PC-9 (cell line): ENCODE measurements at regions of chr12 and their contacts with region 1.

Region 1: GRCh38 chr12:119115296-119115905 is 63.3 kb upstream of the HSPB8 start:
- DNase-seq: peak in 1 of 2 experiments; percentile 27
- H3K4me3 ChIP-seq: no peak overlapping the region
- H3K27ac ChIP-seq: no peak overlapping the region
- H3K4me1 ChIP-seq: no peaks in the 10 kb centered on the region
- H3K27me3 ChIP-seq: peaks cover 4% of the 10 kb centered on the region; the same call in 1 of the 2 replicates
- CTCF ChIP-seq: peak; percentile 96

Region 2: GRCh38 chr12:118884226-118884625 is 231.2 kb before region 1 on chr12:
- CTCF ChIA-PET with region 1: no interaction called
- POLR2A ChIA-PET with region 1: no interaction called
- intact Hi-C with region 1: no loop called
- DNase-seq: no peak
- H3K4me3 ChIP-seq: no peak overlapping the region
- H3K27ac ChIP-seq: no peak overlapping the region
- H3K4me1 ChIP-seq: no peaks in the 10 kb centered on the region
- H3K27me3 ChIP-seq: peaks cover 4% of the 10 kb centered on the region; the same call in 1 of the 2 replicates
- CTCF ChIP-seq: no peak

Region 3: GRCh38 chr12:119069147-119069642 is 46.2 kb before region 1 on chr12:
- CTCF ChIA-PET with region 1: no interaction called
- POLR2A ChIA-PET with region 1: no interaction called
- intact Hi-C with region 1: no loop called
- DNase-seq: no peak
- H3K4me3 ChIP-seq: no peak overlapping the region
- H3K27ac ChIP-seq: no peak overlapping the region
- H3K4me1 ChIP-seq: no peaks in the 10 kb centered on the region
- H3K27me3 ChIP-seq: peaks cover 29% of the 10 kb centered on the region
- CTCF ChIP-seq: no peak

Region 4: GRCh38 chr12:119229837-119230236 is 114.4 kb after region 1 on chr12:
- CTCF ChIA-PET with region 1: no interaction called
- POLR2A ChIA-PET with region 1: no interaction called
- intact Hi-C with region 1: loop called (anchors 10 kb)
- DNase-seq: peak in 1 of 2 experiments; percentile 12
- H3K4me3 ChIP-seq: peak overlapping the region; percentile 32; the same call in 1 of the 2 replicates
- H3K27ac ChIP-seq: no peak overlapping the region
- H3K4me1 ChIP-seq: 0 out of 2 replicates have a peak, but pooled peaks cover 5% of the 10 kb centered on the region
- H3K27me3 ChIP-seq: peaks cover 36% of the 10 kb centered on the region
- CTCF ChIP-seq: no peak

Region 5: GRCh38 chr12:119412811-119413794 is 297.7 kb after region 1 on chr12:
- CTCF ChIA-PET with region 1: no interaction called
- POLR2A ChIA-PET with region 1: no interaction called
- intact Hi-C with region 1: loop called (anchors 1 kb)
- DNase-seq: peak; percentile 37 to 44
- H3K4me3 ChIP-seq: no peak overlapping the region
- H3K27ac ChIP-seq: no peak overlapping the region
- H3K4me1 ChIP-seq: no peaks in the 10 kb centered on the region
- H3K27me3 ChIP-seq: peaks cover 3% of the 10 kb centered on the region; the same call in 1 of the 2 replicates
- CTCF ChIP-seq: peak; percentile 83